A549 (cell line): ENCODE measurements at regions of chr11 and their contacts with region 1.

Region 1: DNA sequence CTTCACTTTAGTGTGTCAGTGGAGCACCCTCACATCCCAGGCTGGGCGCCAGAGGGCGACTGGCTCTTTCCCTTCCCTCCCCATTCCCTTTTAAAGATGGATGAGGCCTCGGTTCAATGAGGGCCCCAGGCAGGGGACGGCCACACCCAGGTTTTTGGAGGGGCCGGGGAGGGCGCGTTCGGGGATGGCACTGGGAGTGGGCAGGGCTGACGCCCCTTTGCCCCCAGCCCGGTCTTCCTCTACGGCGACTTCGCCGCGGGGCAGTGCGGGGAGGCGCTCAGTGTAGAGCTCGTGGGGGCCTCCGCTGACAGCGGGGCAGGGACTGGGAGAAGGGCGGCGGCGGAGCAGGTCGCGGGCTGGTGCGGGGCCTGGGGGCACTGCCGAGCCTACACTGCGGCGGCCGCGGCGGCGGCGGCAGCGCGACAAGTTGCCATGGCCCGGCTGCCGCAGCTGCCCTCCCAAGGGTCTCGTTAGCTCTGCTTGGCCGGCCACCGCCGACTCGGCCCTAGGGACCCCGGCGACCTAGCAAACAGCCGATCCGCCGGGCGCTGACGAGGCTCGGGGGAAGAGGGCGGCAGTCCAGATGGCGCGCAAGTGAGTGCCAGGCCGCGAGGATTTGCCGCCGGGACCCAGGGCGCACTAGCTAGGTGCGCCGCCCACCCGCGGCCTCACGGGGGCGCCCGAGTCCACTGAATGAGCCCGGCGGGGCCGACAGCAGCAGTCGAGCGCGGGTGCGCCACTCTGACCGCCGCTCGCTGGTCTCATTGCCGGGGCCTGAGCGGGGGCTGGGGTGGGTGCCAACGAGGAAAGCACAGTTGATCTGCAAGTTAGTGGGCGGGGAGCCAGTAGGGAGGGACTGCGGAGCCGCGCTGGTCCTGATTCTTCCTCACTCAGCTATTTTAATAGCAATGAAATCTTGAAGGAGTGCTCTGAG is 92.7 kb downstream of the RRM1 start:
- DNase-seq: peak; percentile 80 to 84
- ATAC-seq: peak; percentile 87 to 94
- H3K4me3 ChIP-seq: peak overlapping the region; percentile 77
- H3K27ac ChIP-seq: peak overlapping the region; percentile 91 to 94
- H3K4me1 ChIP-seq: no peaks in the 10 kb centered on the region
- CTCF ChIP-seq: peak; percentile 94
- EP300 ChIP-seq: no peak
- POLR2A ChIP-seq: no peak
- RAD21 ChIP-seq: peak; percentile 92 to 99

Region 2: GRCh38 chr11:3962406-3962840 is 224.9 kb before region 1 on chr11:
- CTCF ChIA-PET with region 1: no interaction called
- POLR2A ChIA-PET with region 1: no interaction called
- DNase-seq: no peak
- ATAC-seq: no peak
- H3K4me3 ChIP-seq: no peak overlapping the region
- H3K27ac ChIP-seq: peak overlapping the region in 1 of 2 experiments; percentile 15; a peak in 1 of 6 replicates
- H3K4me1 ChIP-seq: peaks cover 39% of the 10 kb centered on the region
- CTCF ChIP-seq: no peak
- EP300 ChIP-seq: no peak
- POLR2A ChIP-seq: no peak
- RAD21 ChIP-seq: no peak

Region 3: GRCh38 chr11:4087551-4087950 is 99.8 kb before region 1 on chr11:
- CTCF ChIA-PET with region 1: no interaction called
- POLR2A ChIA-PET with region 1: no interaction called
- DNase-seq: peak in 1 of 2 experiments; percentile 11
- ATAC-seq: peak in 1 of 2 experiments; percentile 55; a peak in 3 of 6 replicates
- H3K4me3 ChIP-seq: no peak overlapping the region
- H3K27ac ChIP-seq: no peak overlapping the region
- H3K4me1 ChIP-seq: no peaks in the 10 kb centered on the region
- CTCF ChIP-seq: no peak
- EP300 ChIP-seq: no peak
- POLR2A ChIP-seq: no peak
- RAD21 ChIP-seq: no peak

Region 4: GRCh38 chr11:4211991-4212390 is 24.7 kb after region 1 on chr11:
- CTCF ChIA-PET with region 1: interaction called, 11 read pairs
- POLR2A ChIA-PET with region 1: no interaction called
- DNase-seq: no peak
- ATAC-seq: no peak
- H3K4me3 ChIP-seq: no peak overlapping the region
- H3K27ac ChIP-seq: no peak overlapping the region
- H3K4me1 ChIP-seq: no peaks in the 10 kb centered on the region
- CTCF ChIP-seq: no peak
- EP300 ChIP-seq: no peak
- POLR2A ChIP-seq: no peak
- RAD21 ChIP-seq: no peak

Region 5: GRCh38 chr11:4466871-4467442 is 279.6 kb after region 1 on chr11:
- CTCF ChIA-PET with region 1: interaction called, 15 read pairs
- POLR2A ChIA-PET with region 1: no interaction called
- DNase-seq: no peak
- ATAC-seq: no peak
- H3K4me3 ChIP-seq: no peak overlapping the region
- H3K27ac ChIP-seq: no peak overlapping the region
- H3K4me1 ChIP-seq: no peaks in the 10 kb centered on the region
- CTCF ChIP-seq: no peak
- EP300 ChIP-seq: no peak
- POLR2A ChIP-seq: no peak
- RAD21 ChIP-seq: no peak

Region 6: GRCh38 chr11:4508886-4509285 is 321.6 kb after region 1 on chr11:
- CTCF ChIA-PET with region 1: interaction called, 10 read pairs
- POLR2A ChIA-PET with region 1: no interaction called
- DNase-seq: no peak
- ATAC-seq: no peak
- H3K4me3 ChIP-seq: no peak overlapping the region
- H3K27ac ChIP-seq: no peak overlapping the region
- H3K4me1 ChIP-seq: no peaks in the 10 kb centered on the region
- CTCF ChIP-seq: no peak
- EP300 ChIP-seq: no peak
- POLR2A ChIP-seq: no peak
- RAD21 ChIP-seq: no peak

Region 7: DNA sequence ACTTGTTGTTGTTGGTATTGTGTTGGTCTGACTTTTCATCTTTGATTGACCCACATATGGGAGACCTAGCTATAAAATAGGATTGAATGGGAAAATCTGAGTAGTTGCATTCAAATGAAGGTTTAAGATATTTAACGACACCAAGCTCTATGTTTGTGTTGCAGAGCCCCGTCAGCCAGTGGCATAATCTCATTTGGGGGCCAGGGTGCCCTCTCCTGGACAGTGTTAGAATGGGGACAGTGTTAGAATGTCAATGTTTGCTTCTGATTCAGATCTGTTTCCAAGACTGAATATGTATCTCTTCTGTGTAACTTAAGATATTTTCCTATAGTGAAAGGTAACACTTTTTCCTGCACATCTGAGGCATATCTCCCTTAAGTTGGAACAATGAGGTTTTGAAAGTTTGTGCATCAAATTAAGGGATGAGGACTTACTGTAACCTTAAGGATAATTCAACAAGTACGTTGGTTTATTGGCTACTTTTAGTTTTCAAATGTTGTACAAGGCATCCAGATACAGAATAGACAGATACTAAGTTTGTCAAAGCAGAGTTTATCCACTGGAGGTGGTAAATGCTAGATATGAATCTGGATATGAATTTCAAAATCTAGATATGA is 352.4 kb after region 1 on chr11:
- CTCF ChIA-PET with region 1: interaction called, 98 read pairs
- POLR2A ChIA-PET with region 1: no interaction called
- DNase-seq: peak; percentile 30 to 43
- ATAC-seq: peak; percentile 93 to 96
- H3K4me3 ChIP-seq: no peak overlapping the region
- H3K27ac ChIP-seq: no peak overlapping the region
- H3K4me1 ChIP-seq: no peaks in the 10 kb centered on the region
- CTCF ChIP-seq: peak; percentile 70
- EP300 ChIP-seq: no peak
- POLR2A ChIP-seq: no peak
- RAD21 ChIP-seq: peak; percentile 53 to 54; a peak in 4 of 5 replicates

Region 8: GRCh38 chr11:4636962-4637661 is 449.8 kb after region 1 on chr11 and contains the start of gene OR51D1:
- CTCF ChIA-PET with region 1: interaction called, 11 read pairs
- POLR2A ChIA-PET with region 1: no interaction called
- DNase-seq: peak; percentile 65 to 66
- ATAC-seq: peak; percentile 84 to 98
- H3K4me3 ChIP-seq: no peak within 1 kb of the TSS
- H3K27ac ChIP-seq: no peak within 1 kb of the TSS
- H3K4me1 ChIP-seq: no peaks in the 10 kb centered on the region
- CTCF ChIP-seq: peak; percentile 72
- EP300 ChIP-seq: no peak
- POLR2A ChIP-seq: no peak
- RAD21 ChIP-seq: peak; percentile 57 to 74
- polyA plus RNA-seq, gene OR51D1: not detected in 2 replicates